ENCODE measurements at regions of chr22 and their contacts with region 1.

Region 1: DNA sequence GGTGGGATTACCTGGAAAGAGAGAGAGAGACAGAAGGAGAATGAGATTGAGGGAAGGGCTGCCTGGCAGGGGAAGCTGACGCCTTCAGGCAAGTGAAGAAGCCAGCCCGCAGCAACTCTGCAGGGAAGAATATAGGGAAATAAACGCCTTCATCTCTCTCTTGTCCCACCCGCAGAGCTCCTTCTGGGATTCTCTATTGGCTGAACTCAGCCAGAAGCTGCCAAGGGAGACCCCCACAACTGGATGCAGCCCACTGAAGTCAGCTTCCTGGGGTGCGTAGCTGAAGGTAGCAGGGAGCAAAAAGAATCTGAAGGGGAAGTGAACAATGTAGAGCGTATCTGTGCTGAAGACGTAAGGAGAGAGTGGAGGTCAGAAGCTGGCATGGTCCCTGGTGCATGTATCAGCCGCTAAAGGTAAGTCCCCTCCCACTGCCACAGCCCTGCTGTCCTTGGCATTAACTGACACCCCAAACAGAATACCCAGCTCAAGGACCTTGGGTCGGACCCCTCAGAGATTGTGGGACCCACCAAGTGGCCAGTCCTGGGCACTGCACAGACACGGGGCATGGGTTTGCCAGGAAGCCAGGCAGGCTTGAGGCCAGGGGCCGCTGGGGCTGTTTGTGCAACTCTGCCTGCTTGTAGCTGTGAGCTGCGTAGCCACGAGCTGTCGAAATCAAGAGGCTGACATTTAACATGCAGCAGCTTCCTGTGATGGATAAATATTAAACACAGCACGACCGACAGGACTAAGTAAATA is 469.9 kb downstream of the MN1 start:
- DNase-seq: peak; percentile 27
- ATAC-seq: peak; percentile 88
- H3K4me3 ChIP-seq: no peak overlapping the region
- H3K27ac ChIP-seq: no peak overlapping the region
- H3K4me1 ChIP-seq: no peaks in the 10 kb centered on the region
- H3K27me3 ChIP-seq: peaks cover 38% of the 10 kb centered on the region
- CTCF ChIP-seq: peak; percentile 43
- POLR2A ChIP-seq: no peak
- RAD21 ChIP-seq: peak; percentile 53

Region 2: DNA sequence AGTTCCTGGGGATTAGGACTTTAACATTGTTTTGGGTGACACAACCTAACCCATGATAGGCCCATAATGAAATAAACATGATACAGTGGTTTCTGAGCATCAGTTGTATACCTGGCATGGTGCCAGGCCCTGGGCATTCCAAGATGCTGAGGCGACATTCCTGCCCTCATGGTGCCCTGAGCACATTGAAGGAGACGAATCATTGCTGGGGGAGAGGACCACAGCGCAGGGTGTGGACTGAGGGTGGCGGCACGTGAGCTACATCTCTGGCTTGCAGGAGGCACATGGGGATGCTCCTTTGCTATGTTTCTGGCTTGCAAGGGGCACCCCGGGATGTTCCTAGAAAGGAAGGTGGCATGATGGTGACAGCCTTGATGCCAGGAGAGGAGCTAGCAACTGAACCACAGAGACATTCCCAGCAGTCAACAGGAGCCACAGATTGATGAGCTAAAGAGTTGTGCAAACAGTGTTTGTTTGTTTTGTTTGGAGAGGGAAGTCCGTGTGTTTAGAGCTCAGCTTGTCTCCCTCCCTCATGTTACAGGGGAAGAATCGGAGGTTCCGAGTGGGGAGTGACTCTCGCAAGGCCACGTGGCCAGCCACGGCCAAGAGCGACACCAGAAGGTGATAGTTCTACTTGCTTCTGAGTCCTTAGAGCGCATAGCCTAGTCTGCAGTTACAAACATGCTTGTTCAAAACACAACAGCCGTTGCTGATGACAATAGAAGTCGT is 567.9 kb before region 1 on chr22:
- CTCF ChIA-PET with region 1: no interaction called
- POLR2A ChIA-PET with region 1: no interaction called
- dilution Hi-C with region 1: no loop called
- in situ Hi-C with region 1: no loop called
- intact Hi-C with region 1: loop called (anchors 10 kb)
- DNase-seq: peak; percentile 45
- ATAC-seq: peak; percentile 72
- H3K4me3 ChIP-seq: no peak overlapping the region
- H3K27ac ChIP-seq: no peak overlapping the region
- H3K4me1 ChIP-seq: peaks cover 5% of the 10 kb centered on the region; the same call in 1 of the 2 replicates
- H3K27me3 ChIP-seq: no peaks in the 10 kb centered on the region
- CTCF ChIP-seq: no peak
- POLR2A ChIP-seq: no peak
- RAD21 ChIP-seq: no peak

Measured in IMR-90 (cell line).